ENCODE measurements at regions of chr21 and their contacts with region 1.

Region 1: GRCh38 chr21:20999659-21000058 is 1.4 kb downstream of the NCAM2 start:
- DNase-seq: no peak
- ATAC-seq: no peak
- H3K4me3 ChIP-seq: no peak overlapping the region
- H3K27ac ChIP-seq: no peak overlapping the region
- H3K4me1 ChIP-seq: no peaks in the 10 kb centered on the region
- H3K27me3 ChIP-seq: no peaks in the 10 kb centered on the region; a peak in 1 of 4 replicates
- CTCF ChIP-seq: peak; percentile 53 to 62 (median 56); a peak in 4 of 6 replicates
- EP300 ChIP-seq: no peak
- POLR2A ChIP-seq: no peak
- RAD21 ChIP-seq: peak; percentile 78

Region 2: DNA sequence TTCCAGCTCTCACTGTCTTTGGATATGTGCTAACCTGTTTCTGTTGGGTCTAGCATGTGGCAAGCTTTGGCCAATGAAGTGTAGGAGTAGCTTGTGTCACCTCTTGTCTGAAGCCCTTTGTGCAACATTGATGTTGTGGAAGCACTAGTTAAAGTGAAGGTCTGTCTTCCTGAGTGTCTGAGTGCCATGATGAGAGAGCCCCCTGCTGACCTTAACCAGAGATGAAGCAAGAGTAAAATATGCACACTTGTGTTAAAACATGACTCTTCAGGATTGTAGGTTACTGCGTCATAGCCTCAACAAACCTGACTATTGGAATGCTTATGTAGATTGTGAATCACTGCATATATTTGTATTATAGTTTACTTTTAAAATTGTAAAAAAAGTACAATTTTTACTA is 102.3 kb after region 1 on chr21:
- CTCF ChIA-PET with region 1: interaction called, 14 read pairs
- POLR2A ChIA-PET with region 1: no interaction called
- RAD21 ChIA-PET with region 1: interaction called, 4 read pairs
- SMC1A ChIA-PET with region 1: interaction called, 13 read pairs
- in situ Hi-C with region 1: no loop called
- intact Hi-C with region 1: loop called (anchors 5 kb)
- DNase-seq: no peak
- ATAC-seq: no peak
- H3K4me3 ChIP-seq: no peak overlapping the region
- H3K27ac ChIP-seq: no peak overlapping the region
- H3K4me1 ChIP-seq: no peaks in the 10 kb centered on the region
- H3K27me3 ChIP-seq: no peaks in the 10 kb centered on the region
- CTCF ChIP-seq: no peak; a peak in 1 of 6 replicates
- EP300 ChIP-seq: no peak
- POLR2A ChIP-seq: no peak
- RAD21 ChIP-seq: no peak

Region 3: GRCh38 chr21:21309510-21309909 is 309.9 kb after region 1 on chr21:
- CTCF ChIA-PET with region 1: no interaction called
- POLR2A ChIA-PET with region 1: no interaction called
- RAD21 ChIA-PET with region 1: no interaction called
- SMC1A ChIA-PET with region 1: no interaction called
- in situ Hi-C with region 1: no loop called
- intact Hi-C with region 1: no loop called
- DNase-seq: no peak
- ATAC-seq: no peak
- H3K4me3 ChIP-seq: no peak overlapping the region
- H3K27ac ChIP-seq: no peak overlapping the region
- H3K4me1 ChIP-seq: no peaks in the 10 kb centered on the region
- H3K27me3 ChIP-seq: no peaks in the 10 kb centered on the region
- CTCF ChIP-seq: no peak
- EP300 ChIP-seq: no peak
- POLR2A ChIP-seq: no peak
- RAD21 ChIP-seq: no peak

Measured in GM12878 (cell line).